MCF 10A (cell line): ENCODE measurements at regions of chr19 and their contacts with region 1.

Region 1: GRCh38 chr19:46265217-46265828 is 31.5 kb upstream of the HIF3A start:
- DNase-seq: peak; percentile 90
- H3K4me3 Mint-ChIP-seq: no peak overlapping the region
- H3K27ac Mint-ChIP-seq: no peak overlapping the region
- H3K4me1 Mint-ChIP-seq: peaks cover 11% of the 10 kb centered on the region
- H3K27me3 Mint-ChIP-seq: no peaks in the 10 kb centered on the region
- CTCF ChIP-seq: peak; percentile 93

Region 2: GRCh38 chr19:46021531-46022041 is 243.7 kb before region 1 on chr19:
- CTCF ChIA-PET with region 1: interaction called, 46 read pairs
- POLR2A ChIA-PET with region 1: no interaction called
- intact Hi-C with region 1: no loop called
- DNase-seq: peak; percentile 74
- H3K4me3 Mint-ChIP-seq: no peak overlapping the region
- H3K27ac Mint-ChIP-seq: no peak overlapping the region
- H3K4me1 Mint-ChIP-seq: peaks cover 16% of the 10 kb centered on the region
- H3K27me3 Mint-ChIP-seq: no peaks in the 10 kb centered on the region
- CTCF ChIP-seq: no peak

Region 3: DNA sequence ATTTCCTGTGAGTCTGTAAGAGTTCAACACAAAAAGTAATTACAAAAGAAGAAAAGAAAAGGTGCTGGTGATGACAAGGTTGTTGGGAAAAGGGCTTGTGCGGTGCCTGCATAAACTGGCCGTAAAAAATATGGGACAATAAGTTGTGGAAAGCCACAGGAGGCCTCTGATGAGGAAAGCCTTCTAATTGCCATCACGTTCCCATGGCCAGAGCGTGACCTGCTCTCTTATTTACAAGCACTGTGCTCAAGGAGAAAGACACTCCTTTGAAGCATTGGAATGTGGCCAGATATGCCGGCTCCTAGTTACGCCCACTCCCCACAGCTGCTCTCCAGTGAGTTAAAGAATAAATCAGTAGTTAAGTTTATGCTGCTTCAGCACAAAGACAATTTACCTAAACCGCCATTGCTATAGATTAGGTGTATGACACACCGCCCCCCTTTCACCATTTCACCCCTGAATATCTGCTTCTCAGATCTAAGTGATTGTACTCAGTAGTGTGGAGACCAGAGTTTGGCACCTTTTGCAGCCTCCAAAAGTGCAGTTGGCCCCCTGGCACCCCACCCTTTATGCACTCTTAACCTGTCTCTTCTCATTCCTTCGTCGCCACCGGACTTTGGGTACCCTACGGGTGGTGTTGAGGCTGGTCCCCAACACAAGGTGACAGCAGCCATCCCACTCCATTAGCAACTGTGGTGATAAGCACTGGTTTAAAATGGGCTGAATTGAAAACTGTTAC is 234.3 kb before region 1 on chr19:
- CTCF ChIA-PET with region 1: interaction called, 46 read pairs
- POLR2A ChIA-PET with region 1: interaction called, 3 read pairs
- intact Hi-C with region 1: loop called (anchors 2 kb)
- DNase-seq: no peak
- H3K4me3 Mint-ChIP-seq: no peak overlapping the region
- H3K27ac Mint-ChIP-seq: no peak overlapping the region
- H3K4me1 Mint-ChIP-seq: peaks cover 6% of the 10 kb centered on the region
- H3K27me3 Mint-ChIP-seq: no peaks in the 10 kb centered on the region
- CTCF ChIP-seq: no peak

Region 4: GRCh38 chr19:46206158-46206557 is 59.2 kb before region 1 on chr19:
- CTCF ChIA-PET with region 1: interaction called, 10 read pairs
- POLR2A ChIA-PET with region 1: interaction called, 3 read pairs
- intact Hi-C with region 1: no loop called
- DNase-seq: peak; percentile 96
- H3K4me3 Mint-ChIP-seq: no peak overlapping the region
- H3K27ac Mint-ChIP-seq: peak overlapping the region; percentile 40
- H3K4me1 Mint-ChIP-seq: peaks cover 55% of the 10 kb centered on the region
- H3K27me3 Mint-ChIP-seq: no peaks in the 10 kb centered on the region
- CTCF ChIP-seq: no peak

Region 5: DNA sequence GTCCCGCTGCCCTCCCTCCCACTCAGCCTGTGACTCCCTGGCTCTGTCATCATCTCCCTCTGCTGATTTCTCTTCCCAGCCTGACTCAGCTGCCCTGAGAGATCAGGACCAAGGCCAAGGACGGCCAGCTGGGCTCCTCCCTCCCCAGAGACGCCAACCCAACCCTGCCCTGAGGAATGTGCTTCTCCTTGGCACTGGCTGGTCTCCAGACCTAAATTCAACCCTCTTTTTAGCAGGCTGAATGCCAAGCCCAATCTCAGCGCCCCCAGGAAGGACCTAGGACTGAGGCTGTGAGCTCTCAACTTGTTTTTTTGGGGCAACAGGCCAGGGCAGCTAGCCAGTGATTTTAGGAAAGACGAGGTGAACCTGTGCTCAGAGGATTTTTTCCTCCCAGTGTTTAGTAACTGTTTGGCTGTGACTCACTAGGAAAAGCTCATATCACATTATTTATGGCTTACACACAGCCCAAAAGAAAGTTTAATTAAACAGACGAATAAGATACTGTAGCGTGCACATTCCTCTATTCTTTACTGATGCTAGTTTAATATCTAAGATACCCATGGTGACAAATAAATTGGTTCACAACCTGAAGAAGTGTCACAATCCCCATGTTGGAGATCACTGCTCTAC is 43.2 kb before region 1 on chr19:
- CTCF ChIA-PET with region 1: interaction called, 7 read pairs
- POLR2A ChIA-PET with region 1: interaction called, 9 read pairs
- intact Hi-C with region 1: loop called (anchors 2 kb)
- DNase-seq: peak; percentile 98
- H3K4me3 Mint-ChIP-seq: peak overlapping the region; percentile 47
- H3K27ac Mint-ChIP-seq: peak overlapping the region; percentile 51
- H3K4me1 Mint-ChIP-seq: peaks cover 33% of the 10 kb centered on the region
- H3K27me3 Mint-ChIP-seq: peaks cover 24% of the 10 kb centered on the region
- CTCF ChIP-seq: no peak